ENCODE measurements at regions of chr2 and their contacts with region 1.

Region 1: DNA sequence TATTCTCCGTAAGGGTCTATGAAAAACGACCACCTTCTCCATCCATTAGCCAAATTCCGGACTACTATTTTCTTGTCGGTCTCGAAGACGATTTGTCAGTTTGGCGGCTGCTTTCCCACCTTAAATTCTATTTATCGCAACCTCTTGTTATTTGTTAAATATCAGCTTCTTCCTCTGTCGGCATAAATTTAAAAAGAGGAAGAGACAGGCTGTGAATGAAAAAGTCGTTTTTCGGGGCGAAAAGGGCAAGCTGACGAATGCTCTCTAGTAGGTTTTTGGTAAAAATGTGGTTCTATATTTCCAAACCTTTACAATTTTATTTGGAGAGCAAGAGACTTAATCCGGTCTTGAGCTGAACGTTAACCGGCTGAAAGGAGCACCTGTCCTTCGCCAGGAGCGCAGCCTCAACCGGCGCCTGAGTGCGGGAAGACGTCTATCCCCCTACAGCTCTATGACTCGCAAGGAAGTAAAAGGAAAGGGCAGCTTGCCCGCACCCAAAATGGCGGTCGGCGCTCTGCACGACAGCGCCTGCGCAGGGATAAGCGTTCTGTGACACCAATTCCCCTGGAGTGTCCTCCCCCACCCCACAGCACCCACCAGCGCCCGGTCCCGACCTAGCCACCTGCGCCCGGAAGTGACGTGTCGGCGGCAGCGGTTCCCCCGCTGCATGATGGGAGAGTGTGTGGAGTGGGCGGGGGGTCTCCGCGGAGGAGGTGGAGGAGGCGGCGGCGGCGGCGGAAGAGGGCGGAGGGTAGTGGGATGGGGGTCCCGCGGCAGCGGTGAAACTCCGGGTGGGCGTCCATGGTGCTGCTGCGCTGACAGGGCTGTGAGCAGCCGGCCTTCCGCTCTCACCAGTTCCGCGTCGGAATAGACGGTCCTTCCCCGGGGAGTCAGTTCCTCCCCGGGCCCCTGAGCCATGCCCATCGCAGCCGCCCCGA is at the start of gene AFTPH:
- DNase-seq: peak; percentile 96 to 100 (median 99)
- ATAC-seq: peak; percentile 98
- H3K4me3 ChIP-seq: peak within 1 kb of the TSS; percentile 99
- H3K4me3 Mint-ChIP-seq: peak within 1 kb of the TSS; percentile 94 to 100 (median 99)
- H3K27ac ChIP-seq: peak within 1 kb of the TSS; percentile 85
- H3K27ac Mint-ChIP-seq: peak within 1 kb of the TSS; percentile 93 to 99 (median 99)
- H3K4me1 ChIP-seq: peaks cover 22 to 25% of the 10 kb centered on the region in 2 donors
- H3K4me1 Mint-ChIP-seq: peaks cover 10 to 51% (median 43%) of the 10 kb centered on the region in 7 donors
- H3K27me3 ChIP-seq: no peaks in the 10 kb centered on the region
- H3K27me3 Mint-ChIP-seq: peaks cover 0 to 12% (median 0%) of the 10 kb centered on the region in 5 donors
- total RNA-seq, gene AFTPH: 25.2 to 46.2 (median 37.0) TPM

Region 2: GRCh38 chr2:63588385-63589147 is 935.4 kb before region 1 on chr2 and contains the starts of genes MDH1 and WDPCP:
- CTCF ChIA-PET with region 1: no interaction called
- POLR2A ChIA-PET with region 1: no interaction called
- intact Hi-C with region 1: loop called in 1 of 2 experiments (anchors 1 kb)
- DNase-seq: peak; percentile 74 to 99 (median 96)
- ATAC-seq: peak; percentile 89
- H3K4me3 ChIP-seq: peak within 1 kb of the TSS; percentile 91
- H3K4me3 Mint-ChIP-seq: peak within 1 kb of the TSS; percentile 89 to 99 (median 94)
- H3K27ac ChIP-seq: peak within 1 kb of the TSS; percentile 89
- H3K27ac Mint-ChIP-seq: peak within 1 kb of the TSS; percentile 89 to 99 (median 95)
- H3K4me1 ChIP-seq: peaks cover 16 to 23% of the 10 kb centered on the region in 2 donors
- H3K4me1 Mint-ChIP-seq: peaks cover 24 to 63% (median 45%) of the 10 kb centered on the region in 7 donors
- H3K27me3 ChIP-seq: no peaks in the 10 kb centered on the region
- H3K27me3 Mint-ChIP-seq: no peaks in the 10 kb centered on the region
- total RNA-seq, gene MDH1: 76.5 to 180 (median 84.2) TPM
- total RNA-seq, gene WDPCP: 7.6 to 19.2 (median 16.1) TPM

Region 3: GRCh38 chr2:64144057-64145013 is 379.6 kb before region 1 on chr2 and contains the start of gene PELI1:
- CTCF ChIA-PET with region 1: no interaction called
- POLR2A ChIA-PET with region 1: no interaction called
- intact Hi-C with region 1: loop called (anchors 1 kb)
- DNase-seq: peak; percentile 82 to 95 (median 88)
- ATAC-seq: peak; percentile 97
- H3K4me3 ChIP-seq: peak within 1 kb of the TSS; percentile 88
- H3K4me3 Mint-ChIP-seq: peak within 1 kb of the TSS in 9 of 10 donors; percentile 87 to 98 (median 93)
- H3K27ac ChIP-seq: peak within 1 kb of the TSS; percentile 98
- H3K27ac Mint-ChIP-seq: peak within 1 kb of the TSS; percentile 93 to 99 (median 96)
- H3K4me1 ChIP-seq: peaks cover 11 to 24% of the 10 kb centered on the region in 2 donors
- H3K4me1 Mint-ChIP-seq: peaks cover 19 to 33% (median 31%) of the 10 kb centered on the region in 7 donors
- H3K27me3 ChIP-seq: no peaks in the 10 kb centered on the region
- H3K27me3 Mint-ChIP-seq: no peaks in the 10 kb centered on the region
- total RNA-seq, gene PELI1: 33.4 to 170 (median 57.2) TPM

Region 4: GRCh38 chr2:64318476-64318748 is 205.5 kb before region 1 on chr2:
- CTCF ChIA-PET with region 1: no interaction called
- POLR2A ChIA-PET with region 1: no interaction called
- intact Hi-C with region 1: no loop called
- DNase-seq: no peak
- ATAC-seq: no peak
- H3K4me3 ChIP-seq: no peak overlapping the region
- H3K4me3 Mint-ChIP-seq: no peak overlapping the region
- H3K27ac ChIP-seq: no peak overlapping the region
- H3K27ac Mint-ChIP-seq: peak overlapping the region in 1 of 9 donors; percentile 72
- H3K4me1 ChIP-seq: no peaks in the 10 kb centered on the region
- H3K4me1 Mint-ChIP-seq: peaks cover 0 to 21% (median 5%) of the 10 kb centered on the region in 7 donors
- H3K27me3 ChIP-seq: no peaks in the 10 kb centered on the region
- H3K27me3 Mint-ChIP-seq: peaks cover 0 to 57% (median 0%) of the 10 kb centered on the region in 5 donors

Region 5: DNA sequence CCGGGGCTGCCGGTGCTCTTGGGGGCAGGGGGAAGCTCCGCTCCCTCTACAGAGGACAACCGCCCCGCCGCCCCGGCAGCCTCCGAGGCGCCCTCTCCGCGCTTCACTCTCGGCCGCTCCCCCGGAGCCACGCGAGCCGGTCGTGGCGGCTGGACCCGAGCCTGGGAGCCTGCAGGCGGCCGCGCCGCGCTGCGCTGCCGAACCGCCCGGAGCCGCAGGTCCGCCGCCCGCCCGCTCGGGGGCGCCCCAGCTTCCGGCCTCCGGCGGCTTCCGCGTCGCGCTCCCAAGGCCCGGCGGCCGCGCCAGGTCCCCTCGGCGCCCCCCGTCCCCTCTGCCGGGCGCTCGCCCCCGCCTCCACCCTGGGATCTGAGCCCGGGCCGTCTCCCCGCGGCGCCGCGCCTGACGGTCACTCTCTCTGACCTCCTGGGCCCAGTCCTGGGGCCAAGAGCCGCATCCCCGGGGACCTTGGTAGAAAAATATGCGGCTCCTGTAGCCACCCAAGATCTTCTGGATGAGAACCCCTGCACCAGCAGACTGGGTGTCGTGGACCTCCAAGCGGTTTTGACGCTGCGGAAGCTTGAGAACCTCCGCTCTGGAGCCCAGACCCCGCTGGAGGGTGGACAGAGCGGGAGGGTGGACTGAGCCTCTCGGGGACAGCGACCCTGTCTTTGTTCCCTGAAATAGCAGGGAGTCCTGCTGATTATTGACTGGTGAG is 85.4 kb after region 1 on chr2:
- CTCF ChIA-PET with region 1: interaction called, 3 read pairs
- POLR2A ChIA-PET with region 1: interaction called, 3 read pairs
- intact Hi-C with region 1: loop called (anchors 1 kb)
- DNase-seq: peak; percentile 49 to 85 (median 78)
- ATAC-seq: peak; percentile 81
- H3K4me3 ChIP-seq: peak overlapping the region; percentile 66
- H3K4me3 Mint-ChIP-seq: peak overlapping the region; percentile 61 to 86 (median 72)
- H3K27ac ChIP-seq: peak overlapping the region; percentile 64
- H3K27ac Mint-ChIP-seq: peak overlapping the region in 8 of 9 donors; percentile 51 to 82 (median 66)
- H3K4me1 ChIP-seq: peaks cover 17 to 27% of the 10 kb centered on the region in 2 donors
- H3K4me1 Mint-ChIP-seq: peaks cover 0 to 33% (median 21%) of the 10 kb centered on the region in 7 donors
- H3K27me3 ChIP-seq: no peaks in the 10 kb centered on the region
- H3K27me3 Mint-ChIP-seq: peaks cover 0 to 24% (median 0%) of the 10 kb centered on the region in 5 donors

Region 6: GRCh38 chr2:64767670-64768468 is 243.9 kb after region 1 on chr2:
- CTCF ChIA-PET with region 1: no interaction called
- POLR2A ChIA-PET with region 1: no interaction called
- intact Hi-C with region 1: loop called (anchors 1 kb)
- DNase-seq: peak; percentile 35 to 78 (median 55)
- ATAC-seq: peak; percentile 89
- H3K4me3 ChIP-seq: peak overlapping the region; percentile 80
- H3K4me3 Mint-ChIP-seq: peak overlapping the region; percentile 90 to 99 (median 96)
- H3K27ac ChIP-seq: peak overlapping the region; percentile 73
- H3K27ac Mint-ChIP-seq: peak overlapping the region; percentile 92 to 97 (median 95)
- H3K4me1 ChIP-seq: peaks cover 3 to 12% of the 10 kb centered on the region in 2 donors
- H3K4me1 Mint-ChIP-seq: peaks cover 9 to 40% (median 23%) of the 10 kb centered on the region in 7 donors
- H3K27me3 ChIP-seq: no peaks in the 10 kb centered on the region
- H3K27me3 Mint-ChIP-seq: peaks cover 0 to 15% (median 0%) of the 10 kb centered on the region in 5 donors

Region 7: GRCh38 chr2:64988420-64989125 is 464.6 kb after region 1 on chr2:
- CTCF ChIA-PET with region 1: no interaction called
- POLR2A ChIA-PET with region 1: no interaction called
- intact Hi-C with region 1: loop called (anchors 2 to 5 kb)
- DNase-seq: peak; percentile 17 to 70 (median 39)
- ATAC-seq: peak; percentile 47
- H3K4me3 ChIP-seq: peak overlapping the region; percentile 76
- H3K4me3 Mint-ChIP-seq: peak overlapping the region; percentile 80 to 92 (median 86)
- H3K27ac ChIP-seq: no peak overlapping the region
- H3K27ac Mint-ChIP-seq: peak overlapping the region in 4 of 9 donors; percentile 40 to 73 (median 44)
- H3K4me1 ChIP-seq: peaks cover 0 to 8% of the 10 kb centered on the region in 2 donors
- H3K4me1 Mint-ChIP-seq: peaks cover 16 to 62% (median 24%) of the 10 kb centered on the region in 7 donors
- H3K27me3 ChIP-seq: no peaks in the 10 kb centered on the region
- H3K27me3 Mint-ChIP-seq: peaks cover 0 to 33% (median 4%) of the 10 kb centered on the region in 5 donors

Region 8: GRCh38 chr2:65432227-65433190 is 908.6 kb after region 1 on chr2 and contains the start of gene SPRED2:
- CTCF ChIA-PET with region 1: no interaction called
- POLR2A ChIA-PET with region 1: no interaction called
- intact Hi-C with region 1: loop called in 1 of 2 experiments (anchors 5 kb)
- DNase-seq: peak; percentile 36 to 75 (median 51)
- ATAC-seq: peak; percentile 58
- H3K4me3 ChIP-seq: peak within 1 kb of the TSS; percentile 75
- H3K4me3 Mint-ChIP-seq: peak within 1 kb of the TSS; percentile 89 to 95 (median 90)
- H3K27ac ChIP-seq: peak within 1 kb of the TSS; percentile 8
- H3K27ac Mint-ChIP-seq: peak within 1 kb of the TSS in 5 of 9 donors; percentile 31 to 90 (median 69)
- H3K4me1 ChIP-seq: peaks cover 8 to 11% of the 10 kb centered on the region in 2 donors
- H3K4me1 Mint-ChIP-seq: peaks cover 7 to 33% (median 16%) of the 10 kb centered on the region in 7 donors
- H3K27me3 ChIP-seq: peaks cover 0 to 22% of the 10 kb centered on the region in 2 donors
- H3K27me3 Mint-ChIP-seq: peaks cover 27 to 67% (median 36%) of the 10 kb centered on the region in 5 donors
- total RNA-seq, gene SPRED2: 0.34 to 7.9 (median 1.7) TPM

Region 9: DNA sequence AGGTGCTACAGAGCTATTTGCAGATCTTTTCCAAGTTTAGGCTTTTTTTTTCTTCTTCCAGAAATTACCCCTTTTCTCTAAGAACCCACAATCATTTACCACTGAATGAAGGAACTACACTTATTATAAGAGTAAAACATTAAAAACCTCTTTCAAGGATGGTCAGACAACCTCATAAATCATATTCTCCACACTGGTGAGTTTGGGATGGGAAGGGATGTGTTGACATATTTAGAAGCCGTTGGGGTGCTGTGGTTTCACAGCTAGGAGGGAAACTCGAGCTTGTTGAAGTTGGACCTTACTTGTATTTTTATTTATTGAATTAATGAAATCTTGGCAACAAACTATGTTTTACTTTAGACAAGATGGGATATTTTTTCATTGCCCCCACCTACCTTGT is 1621.6 kb after region 1 on chr2:
- CTCF ChIA-PET with region 1: no interaction called
- POLR2A ChIA-PET with region 1: no interaction called
- intact Hi-C with region 1: no loop called
- DNase-seq: no peak
- ATAC-seq: no peak
- H3K4me3 ChIP-seq: no peak overlapping the region
- H3K4me3 Mint-ChIP-seq: no peak overlapping the region
- H3K27ac ChIP-seq: no peak overlapping the region
- H3K27ac Mint-ChIP-seq: no peak overlapping the region
- H3K4me1 ChIP-seq: no peaks in the 10 kb centered on the region
- H3K4me1 Mint-ChIP-seq: no peaks in the 10 kb centered on the region
- H3K27me3 ChIP-seq: no peaks in the 10 kb centered on the region
- H3K27me3 Mint-ChIP-seq: peaks cover 0 to 7% (median 0%) of the 10 kb centered on the region in 5 donors

Measured in naive thymus-derived CD4-positive, alpha-beta T cell (primary cell).